Mammary epithelial cell (primary cell): ENCODE measurements at regions of chr3 and their contacts with region 1.

Region 1: DNA sequence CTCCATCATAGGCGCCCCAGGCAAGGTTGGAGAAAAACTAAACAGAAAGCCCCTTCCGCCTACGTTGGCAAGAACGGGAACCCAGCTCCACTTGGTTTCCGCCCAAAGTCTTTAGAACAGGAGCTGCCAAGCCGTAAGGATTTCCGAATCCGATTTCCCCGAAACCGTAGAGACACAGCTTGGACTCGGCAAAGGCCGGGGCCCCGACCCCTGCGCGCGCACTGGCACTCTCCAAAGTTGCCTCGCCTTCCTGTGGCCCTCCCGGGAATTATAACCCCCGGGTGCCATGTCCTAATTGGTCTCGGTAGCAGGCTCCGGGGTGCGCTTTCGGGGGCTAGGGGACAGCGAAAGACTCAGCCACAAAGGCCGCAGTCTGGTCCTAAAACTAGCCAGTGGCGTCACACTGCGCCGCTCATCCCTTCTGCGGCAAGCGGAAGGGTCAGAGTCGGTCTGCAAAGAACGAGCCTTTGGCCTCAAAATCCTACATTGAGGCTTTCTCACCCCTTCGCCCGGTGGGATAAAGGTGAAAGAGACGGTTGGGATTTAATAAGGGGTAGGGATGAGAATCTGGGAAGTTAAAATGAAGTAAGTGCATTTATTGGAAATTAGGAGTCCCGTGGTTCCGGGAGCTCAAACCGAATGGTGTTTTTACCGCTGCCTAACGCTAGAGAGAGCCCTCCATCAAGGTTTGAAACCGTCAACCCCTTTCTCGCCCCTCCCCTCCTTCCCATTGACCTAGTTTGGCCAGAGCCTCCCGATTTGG is 6.8 kb downstream of the BCL6 start:
- DNase-seq: peak; percentile 84
- H3K4me3 ChIP-seq: peak overlapping the region; percentile 32 to 65 (median 63)
- H3K27ac ChIP-seq: peak overlapping the region; percentile 91
- H3K4me1 ChIP-seq: peaks cover 63% of the 10 kb centered on the region
- H3K27me3 ChIP-seq: no peaks in the 10 kb centered on the region
- CTCF ChIP-seq: peak; percentile 67 to 80

Region 2: GRCh38 chr3:187533797-187534196 is 204.7 kb before region 1 on chr3:
- CTCF ChIA-PET with region 1: interaction called, 18 read pairs
- dilution Hi-C with region 1: no loop called
- in situ Hi-C with region 1: no loop called
- intact Hi-C with region 1: no loop called
- DNase-seq: no peak
- H3K4me3 ChIP-seq: no peak overlapping the region
- H3K27ac ChIP-seq: no peak overlapping the region
- H3K4me1 ChIP-seq: no peaks in the 10 kb centered on the region
- H3K27me3 ChIP-seq: no peaks in the 10 kb centered on the region
- CTCF ChIP-seq: no peak

Region 3: GRCh38 chr3:187900993-187901755 is 162.7 kb after region 1 on chr3:
- CTCF ChIA-PET with region 1: no interaction called
- dilution Hi-C with region 1: no loop called
- in situ Hi-C with region 1: no loop called
- intact Hi-C with region 1: no loop called
- DNase-seq: no peak
- H3K4me3 ChIP-seq: no peak overlapping the region
- H3K27ac ChIP-seq: no peak overlapping the region
- H3K4me1 ChIP-seq: no peaks in the 10 kb centered on the region
- H3K27me3 ChIP-seq: peaks cover 10% of the 10 kb centered on the region
- CTCF ChIP-seq: no peak

Region 4: DNA sequence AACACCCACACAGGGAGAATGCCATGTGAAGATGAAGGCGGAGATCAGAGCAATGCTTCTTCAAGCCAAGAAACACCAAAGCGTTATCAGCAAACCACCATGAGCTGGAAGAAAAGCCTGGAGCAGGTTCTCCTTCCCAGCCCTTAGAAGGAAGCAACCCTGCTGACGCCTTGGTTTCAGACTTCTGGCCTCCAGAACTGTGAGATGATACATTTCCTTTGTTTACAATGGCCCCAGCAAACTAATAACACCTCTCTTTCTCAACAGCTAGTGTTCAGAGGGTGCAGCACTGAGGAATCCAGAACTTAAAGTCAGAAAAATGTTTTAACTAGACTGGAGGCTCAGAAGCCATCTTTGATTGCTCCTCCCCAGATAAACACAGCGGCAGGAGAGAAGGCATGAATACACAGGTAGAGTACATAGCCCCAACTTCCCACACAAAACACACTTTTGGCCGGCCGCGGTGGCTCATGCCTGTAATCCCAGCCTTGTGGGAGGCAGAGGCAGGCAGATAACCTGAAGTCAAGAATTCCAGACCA is 283.1 kb after region 1 on chr3:
- CTCF ChIA-PET with region 1: no interaction called
- dilution Hi-C with region 1: no loop called
- in situ Hi-C with region 1: no loop called
- intact Hi-C with region 1: no loop called
- DNase-seq: peak; percentile 17
- H3K4me3 ChIP-seq: no peak overlapping the region
- H3K27ac ChIP-seq: no peak overlapping the region
- H3K4me1 ChIP-seq: no peaks in the 10 kb centered on the region
- H3K27me3 ChIP-seq: no peaks in the 10 kb centered on the region
- CTCF ChIP-seq: no peak

Region 5: GRCh38 chr3:188383748-188384147 is 645.2 kb after region 1 on chr3:
- CTCF ChIA-PET with region 1: interaction called, 20 read pairs
- dilution Hi-C with region 1: no loop called
- in situ Hi-C with region 1: loop called in 1 of 2 experiments (anchors 25 kb)
- intact Hi-C with region 1: loop called (anchors 2 kb)
- DNase-seq: no peak
- H3K4me3 ChIP-seq: no peak overlapping the region
- H3K27ac ChIP-seq: no peak overlapping the region
- H3K4me1 ChIP-seq: peaks cover 8% of the 10 kb centered on the region
- H3K27me3 ChIP-seq: no peaks in the 10 kb centered on the region
- CTCF ChIP-seq: no peak

Region 6: DNA sequence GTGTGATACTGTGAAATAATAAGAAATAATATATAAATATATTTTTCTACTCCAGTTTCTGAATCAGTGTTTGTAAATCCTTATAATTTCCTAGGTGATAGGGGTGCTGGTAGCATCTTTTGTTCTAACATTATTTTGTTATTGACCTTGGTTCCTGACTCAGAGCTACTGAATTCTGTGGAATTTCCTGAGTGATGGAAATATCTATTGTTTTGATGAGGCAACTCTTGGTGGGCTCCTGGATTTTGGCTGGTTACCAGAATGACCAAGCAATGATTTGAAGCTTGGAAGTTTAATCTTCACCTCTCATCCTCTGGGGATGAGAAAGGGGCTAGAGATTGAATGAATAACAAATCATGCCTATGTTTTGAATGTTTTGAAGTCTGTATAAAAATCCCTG is 792.7 kb after region 1 on chr3:
- CTCF ChIA-PET with region 1: no interaction called
- dilution Hi-C with region 1: no loop called
- in situ Hi-C with region 1: no loop called
- intact Hi-C with region 1: loop called (anchors 5 kb)
- DNase-seq: peak; percentile 71
- H3K4me3 ChIP-seq: no peak overlapping the region
- H3K27ac ChIP-seq: peak overlapping the region; percentile 3
- H3K4me1 ChIP-seq: peaks cover 40% of the 10 kb centered on the region
- H3K27me3 ChIP-seq: no peaks in the 10 kb centered on the region
- CTCF ChIP-seq: no peak

Region 7: GRCh38 chr3:188683032-188683521 is 944.6 kb after region 1 on chr3:
- CTCF ChIA-PET with region 1: no interaction called
- dilution Hi-C with region 1: no loop called
- in situ Hi-C with region 1: loop called in 1 of 2 experiments (anchors 25 kb)
- intact Hi-C with region 1: loop called (anchors 1 kb)
- DNase-seq: peak; percentile 43
- H3K4me3 ChIP-seq: no peak overlapping the region
- H3K27ac ChIP-seq: no peak overlapping the region
- H3K4me1 ChIP-seq: peaks cover 8% of the 10 kb centered on the region
- H3K27me3 ChIP-seq: no peaks in the 10 kb centered on the region
- CTCF ChIP-seq: no peak

Region 8: DNA sequence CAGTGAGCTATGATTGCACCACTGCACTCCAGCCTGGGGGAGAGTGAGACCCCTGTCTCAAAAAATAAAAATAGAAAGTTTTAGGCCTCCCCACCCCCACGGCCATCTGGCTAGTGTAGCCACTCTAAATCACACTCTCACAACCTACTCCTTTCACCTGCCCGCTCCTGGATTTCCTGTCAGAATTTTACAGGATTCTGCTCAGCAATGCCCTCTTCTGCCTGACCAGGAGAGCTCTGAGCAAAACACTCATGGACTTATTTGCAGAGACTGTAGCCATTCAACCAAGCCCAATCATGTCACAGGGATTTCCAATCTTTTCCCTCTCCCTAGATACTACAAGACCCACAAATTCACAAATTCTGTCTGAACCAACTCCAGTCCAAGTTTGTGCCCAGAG is 1190.6 kb after region 1 on chr3:
- CTCF ChIA-PET with region 1: no interaction called
- dilution Hi-C with region 1: no loop called
- in situ Hi-C with region 1: no loop called
- intact Hi-C with region 1: loop called (anchors 1 kb)
- DNase-seq: peak; percentile 21
- H3K4me3 ChIP-seq: no peak overlapping the region
- H3K27ac ChIP-seq: no peak overlapping the region
- H3K4me1 ChIP-seq: peaks cover 2% of the 10 kb centered on the region
- H3K27me3 ChIP-seq: no peaks in the 10 kb centered on the region
- CTCF ChIP-seq: peak; percentile 5 to 55

Region 9: DNA sequence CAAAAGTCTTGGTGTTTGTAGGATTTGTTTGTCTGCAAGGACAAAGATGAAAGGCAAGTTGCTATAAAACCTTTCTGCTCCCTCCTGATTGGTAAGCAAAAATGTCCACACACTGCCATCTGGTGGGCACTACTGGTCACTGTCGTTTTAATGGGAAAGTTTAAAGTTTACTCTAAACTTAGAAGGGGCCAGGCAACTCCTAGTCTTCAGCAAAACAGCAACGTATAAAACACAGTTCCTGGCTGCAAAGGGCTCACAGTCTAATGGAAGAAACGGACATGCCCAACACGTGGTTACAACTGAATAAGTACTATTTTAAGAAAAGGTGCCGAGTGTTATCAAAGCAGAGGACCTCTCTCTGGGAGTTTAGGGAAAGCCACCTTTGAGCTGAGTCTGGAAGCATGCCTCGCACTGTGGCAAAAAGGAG is 1409.6 kb after region 1 on chr3:
- CTCF ChIA-PET with region 1: interaction called, 4 read pairs
- dilution Hi-C with region 1: loop called (anchors 25 kb)
- in situ Hi-C with region 1: loop called (anchors 5 to 10 kb)
- intact Hi-C with region 1: no loop called
- DNase-seq: peak; percentile 37
- H3K4me3 ChIP-seq: no peak overlapping the region
- H3K27ac ChIP-seq: no peak overlapping the region
- H3K4me1 ChIP-seq: no peaks in the 10 kb centered on the region
- H3K27me3 ChIP-seq: no peaks in the 10 kb centered on the region
- CTCF ChIP-seq: peak; percentile 76 to 86